AG04450 (cell line): ENCODE measurements at regions of chr4 and their contacts with region 1.

Region 1: GRCh38 chr4:139603576-139604387 is 47.8 kb upstream of the SETD7 start:
- DNase-seq: no peak
- H3K4me3 ChIP-seq: no peak overlapping the region
- H3K27ac ChIP-seq: no peak overlapping the region
- H3K27me3 ChIP-seq: no peaks in the 10 kb centered on the region
- CTCF ChIP-seq: peak; percentile 71

Region 2: GRCh38 chr4:139234253-139234652 is 369.5 kb before region 1 on chr4:
- CTCF ChIA-PET with region 1: no interaction called
- POLR2A ChIA-PET with region 1: no interaction called
- DNase-seq: no peak
- H3K4me3 ChIP-seq: no peak overlapping the region
- H3K27ac ChIP-seq: no peak overlapping the region
- H3K27me3 ChIP-seq: no peaks in the 10 kb centered on the region
- CTCF ChIP-seq: no peak

Region 3: DNA sequence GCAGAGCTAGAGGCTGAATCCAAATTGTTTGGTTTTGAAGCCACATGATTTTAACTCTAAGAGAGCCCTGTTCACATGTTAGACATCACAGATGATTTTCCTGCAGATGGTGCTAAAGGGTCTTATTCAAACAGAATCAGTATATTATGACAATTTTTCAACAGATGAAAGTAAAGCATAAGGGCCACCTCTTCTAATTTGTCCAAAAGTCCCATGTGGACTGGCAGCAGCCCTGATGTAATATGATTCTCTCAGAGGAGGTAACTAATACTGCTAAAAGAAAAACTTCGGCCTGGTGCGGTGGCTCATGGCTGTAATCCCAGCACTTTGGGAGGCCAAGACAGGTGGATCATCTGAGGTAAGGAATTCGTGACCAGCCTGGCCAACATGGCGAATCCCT is 21.7 kb before region 1 on chr4:
- CTCF ChIA-PET with region 1: interaction called, 16 read pairs
- POLR2A ChIA-PET with region 1: no interaction called
- DNase-seq: no peak
- H3K4me3 ChIP-seq: no peak overlapping the region
- H3K27ac ChIP-seq: no peak overlapping the region
- H3K27me3 ChIP-seq: peaks cover 16% of the 10 kb centered on the region
- CTCF ChIP-seq: peak; percentile 27; the same call in 1 of the 2 replicates

Region 4: GRCh38 chr4:139589336-139590018 is 14.3 kb before region 1 on chr4:
- CTCF ChIA-PET with region 1: interaction called, 16 read pairs
- POLR2A ChIA-PET with region 1: no interaction called
- DNase-seq: no peak
- H3K4me3 ChIP-seq: no peak overlapping the region
- H3K27ac ChIP-seq: no peak overlapping the region
- H3K27me3 ChIP-seq: peaks cover 8% of the 10 kb centered on the region
- CTCF ChIP-seq: no peak

Region 5: GRCh38 chr4:139619644-139620043 is 15.9 kb after region 1 on chr4:
- CTCF ChIA-PET with region 1: interaction called, 17 read pairs
- POLR2A ChIA-PET with region 1: no interaction called
- DNase-seq: no peak
- H3K4me3 ChIP-seq: no peak overlapping the region
- H3K27ac ChIP-seq: no peak overlapping the region
- H3K27me3 ChIP-seq: peaks cover 9% of the 10 kb centered on the region
- CTCF ChIP-seq: peak; percentile 56

Region 6: DNA sequence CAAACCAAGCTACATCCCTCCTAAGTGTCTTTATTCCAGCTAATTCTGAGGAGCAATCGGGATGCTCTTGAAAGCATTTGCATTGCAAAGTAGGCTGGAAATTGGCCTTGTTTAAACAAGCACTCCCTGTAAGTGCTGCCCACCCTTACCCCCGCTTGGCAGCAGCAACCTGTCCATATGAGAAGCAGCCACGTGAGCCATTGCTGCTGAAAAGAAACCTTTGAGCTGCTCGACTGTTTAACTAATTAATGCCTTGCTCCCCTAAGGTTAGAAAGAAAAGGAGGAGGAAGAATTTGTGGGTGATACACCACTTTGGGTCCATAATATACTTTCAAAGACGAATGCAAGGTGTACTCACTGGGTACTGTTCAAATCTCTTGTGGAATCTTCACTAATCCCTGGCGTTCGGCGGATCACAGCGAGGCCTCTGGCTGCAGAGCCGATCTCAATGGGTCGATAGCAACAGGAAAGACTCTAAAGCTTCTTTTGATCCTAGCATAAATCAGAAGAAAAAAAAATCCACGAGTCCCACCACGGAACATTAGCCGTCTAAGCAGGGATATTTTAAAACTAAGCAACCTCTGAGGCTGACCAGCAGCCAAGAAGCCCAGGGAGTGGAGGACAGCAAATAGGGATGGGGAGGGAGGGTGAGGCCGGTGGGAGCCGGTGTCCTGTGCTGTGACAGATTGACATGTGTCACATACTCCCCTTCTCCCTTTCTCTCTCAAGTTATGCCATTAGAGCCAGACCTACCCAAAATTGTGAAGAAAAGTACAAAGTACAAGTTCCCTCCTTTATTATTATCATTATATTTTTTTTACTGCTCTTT is 24.6 kb after region 1 on chr4:
- CTCF ChIA-PET with region 1: interaction called, 14 read pairs
- POLR2A ChIA-PET with region 1: no interaction called
- DNase-seq: no peak
- H3K4me3 ChIP-seq: no peak overlapping the region
- H3K27ac ChIP-seq: no peak overlapping the region
- H3K27me3 ChIP-seq: peaks cover 16% of the 10 kb centered on the region
- CTCF ChIP-seq: no peak

Region 7: GRCh38 chr4:139633661-139634060 is 29.9 kb after region 1 on chr4:
- CTCF ChIA-PET with region 1: interaction called, 14 read pairs
- POLR2A ChIA-PET with region 1: no interaction called
- DNase-seq: no peak
- H3K4me3 ChIP-seq: no peak overlapping the region
- H3K27ac ChIP-seq: no peak overlapping the region
- H3K27me3 ChIP-seq: peaks cover 23% of the 10 kb centered on the region
- CTCF ChIP-seq: peak; percentile 57

Region 8: DNA sequence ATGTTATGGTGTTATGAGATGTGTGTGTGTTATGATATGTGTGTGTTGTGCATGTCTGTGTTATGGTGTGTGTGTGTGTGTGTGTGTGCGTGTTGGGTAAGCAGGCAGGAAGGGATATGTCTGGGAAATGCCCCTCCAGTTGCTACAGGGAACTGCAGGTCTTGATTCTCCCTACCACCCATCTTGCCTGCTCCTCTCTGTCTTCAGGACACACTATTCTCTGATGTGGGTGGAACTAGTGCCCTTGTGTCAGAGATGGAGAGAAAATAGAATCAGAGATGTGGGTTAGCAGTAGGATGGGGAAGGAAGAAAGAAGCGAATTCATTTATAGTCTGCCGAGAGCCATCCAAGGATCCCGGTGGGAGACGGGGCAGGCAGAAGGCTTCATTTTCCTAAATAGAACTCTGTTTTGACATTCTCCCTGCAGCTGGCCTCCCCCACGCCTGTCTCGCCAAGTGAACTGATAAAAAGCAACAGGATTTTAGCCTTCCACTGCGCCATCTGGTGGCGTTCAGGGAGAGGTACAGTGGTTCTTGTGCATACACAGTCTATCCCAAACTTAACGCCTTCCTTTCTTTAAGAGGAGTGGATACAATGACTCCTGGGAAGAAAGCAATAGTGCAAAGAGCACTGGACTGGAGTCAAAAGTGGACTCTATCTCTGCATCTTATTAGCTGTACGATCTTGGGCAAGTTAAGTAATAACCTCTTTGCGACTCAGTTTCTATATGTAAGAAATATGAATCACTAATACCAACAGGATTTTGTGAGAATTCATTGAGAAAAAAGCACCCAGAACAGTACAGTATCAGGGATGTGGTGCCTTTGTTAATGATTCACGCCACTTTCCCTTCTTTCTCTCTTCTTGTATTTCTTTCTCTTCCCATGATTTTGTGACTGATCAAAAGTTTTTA is 47.8 kb after region 1 on chr4:
- CTCF ChIA-PET with region 1: interaction called, 232 read pairs
- POLR2A ChIA-PET with region 1: no interaction called
- DNase-seq: peak; percentile 77
- H3K4me3 ChIP-seq: no peak overlapping the region
- H3K27ac ChIP-seq: no peak overlapping the region
- H3K27me3 ChIP-seq: no peaks in the 10 kb centered on the region
- CTCF ChIP-seq: peak; percentile 92